ENCODE measurements at regions of chr10 and their contacts with region 1.

Region 1: GRCh38 chr10:100158044-100158808 is 27.6 kb downstream of the ERLIN1 start:
- DNase-seq: no peak
- ATAC-seq: no peak
- H3K4me3 ChIP-seq: no peak overlapping the region
- H3K4me3 Mint-ChIP-seq: no peak overlapping the region
- H3K27ac ChIP-seq: no peak overlapping the region
- H3K27ac Mint-ChIP-seq: no peak overlapping the region
- H3K4me1 ChIP-seq: no peaks in the 10 kb centered on the region
- H3K4me1 Mint-ChIP-seq: peaks cover 14% of the 10 kb centered on the region
- H3K27me3 ChIP-seq: no peaks in the 10 kb centered on the region
- H3K27me3 Mint-ChIP-seq: no peaks in the 10 kb centered on the region
- CTCF ChIP-seq: no peak

Region 2: DNA sequence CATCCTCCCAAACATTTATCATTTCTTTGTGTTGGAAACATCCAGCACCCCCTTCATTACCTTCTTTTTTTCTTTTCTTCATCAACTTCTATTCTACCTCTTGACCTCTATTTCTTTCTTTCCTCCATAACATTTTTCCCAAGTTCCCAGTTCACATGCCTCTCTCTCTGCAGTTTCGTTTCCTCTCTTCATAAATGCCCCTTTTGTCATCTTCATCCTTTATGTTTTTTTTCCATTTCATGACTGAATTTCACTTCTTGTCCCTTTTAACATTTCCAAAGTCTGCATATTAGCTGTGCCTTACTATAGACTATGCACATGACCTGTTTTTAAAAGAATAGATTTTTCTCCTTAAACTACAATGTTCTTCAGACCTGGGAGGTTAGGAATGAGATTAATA is 100.3 kb before region 1 on chr10:
- CTCF ChIA-PET with region 1: no interaction called
- POLR2A ChIA-PET with region 1: no interaction called
- intact Hi-C with region 1: no loop called
- DNase-seq: no peak
- ATAC-seq: no peak
- H3K4me3 ChIP-seq: no peak overlapping the region
- H3K4me3 Mint-ChIP-seq: no peak overlapping the region
- H3K27ac ChIP-seq: no peak overlapping the region
- H3K27ac Mint-ChIP-seq: no peak overlapping the region
- H3K4me1 ChIP-seq: no peaks in the 10 kb centered on the region
- H3K4me1 Mint-ChIP-seq: no peaks in the 10 kb centered on the region
- H3K27me3 ChIP-seq: no peaks in the 10 kb centered on the region
- H3K27me3 Mint-ChIP-seq: peaks cover 27% of the 10 kb centered on the region
- CTCF ChIP-seq: no peak

Region 3: DNA sequence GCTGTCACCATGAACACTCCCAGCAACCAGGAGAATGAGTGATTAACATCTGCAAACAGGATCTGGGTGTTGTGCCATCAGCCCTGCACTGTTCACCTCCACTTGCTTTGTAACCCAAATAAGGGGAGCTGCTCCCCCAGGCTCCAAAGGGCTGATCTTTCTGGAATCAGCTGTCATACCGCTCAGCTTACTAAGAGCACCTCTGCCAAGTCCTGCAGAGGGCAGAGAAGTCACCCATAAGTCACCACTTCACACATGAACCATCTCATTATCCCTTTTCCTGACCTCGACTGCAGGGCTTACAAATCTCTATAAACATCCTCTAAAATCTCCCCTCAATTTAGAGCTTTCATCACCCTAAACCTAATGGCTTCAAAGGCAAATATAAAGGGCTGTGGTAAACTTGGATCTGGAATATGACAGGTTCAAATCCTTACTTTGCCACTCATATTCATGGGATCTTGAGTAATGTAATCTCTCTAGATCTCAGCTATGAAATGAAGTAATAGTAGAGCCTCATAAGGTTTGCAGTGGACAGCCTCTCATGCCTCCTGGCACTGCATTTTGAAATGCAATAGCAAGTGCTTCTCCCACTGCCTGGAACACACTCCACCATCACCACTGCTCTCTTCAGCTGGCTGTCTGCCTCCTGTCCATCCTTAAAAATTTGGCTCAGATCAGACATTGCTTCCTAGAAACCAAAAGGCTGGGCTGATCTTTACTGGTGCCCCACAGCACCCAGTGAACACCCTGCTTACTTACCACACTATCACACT is 11.2 kb before region 1 on chr10:
- CTCF ChIA-PET with region 1: no interaction called
- POLR2A ChIA-PET with region 1: no interaction called
- intact Hi-C with region 1: no loop called
- DNase-seq: no peak
- ATAC-seq: no peak
- H3K4me3 ChIP-seq: no peak overlapping the region
- H3K4me3 Mint-ChIP-seq: no peak overlapping the region
- H3K27ac ChIP-seq: no peak overlapping the region
- H3K27ac Mint-ChIP-seq: no peak overlapping the region
- H3K4me1 ChIP-seq: no peaks in the 10 kb centered on the region
- H3K4me1 Mint-ChIP-seq: no peaks in the 10 kb centered on the region
- H3K27me3 ChIP-seq: no peaks in the 10 kb centered on the region
- H3K27me3 Mint-ChIP-seq: peaks cover 11% of the 10 kb centered on the region
- CTCF ChIP-seq: no peak

Region 4: GRCh38 chr10:100204370-100204769 is 46.1 kb after region 1 on chr10:
- CTCF ChIA-PET with region 1: no interaction called
- POLR2A ChIA-PET with region 1: no interaction called
- intact Hi-C with region 1: loop called in 1 of 2 experiments (anchors 1 kb)
- DNase-seq: no peak
- ATAC-seq: no peak
- H3K4me3 ChIP-seq: no peak overlapping the region
- H3K4me3 Mint-ChIP-seq: no peak overlapping the region
- H3K27ac ChIP-seq: no peak overlapping the region
- H3K27ac Mint-ChIP-seq: no peak overlapping the region
- H3K4me1 ChIP-seq: no peaks in the 10 kb centered on the region
- H3K4me1 Mint-ChIP-seq: no peaks in the 10 kb centered on the region
- H3K27me3 ChIP-seq: no peaks in the 10 kb centered on the region
- H3K27me3 Mint-ChIP-seq: no peaks in the 10 kb centered on the region
- CTCF ChIP-seq: no peak

Region 5: DNA sequence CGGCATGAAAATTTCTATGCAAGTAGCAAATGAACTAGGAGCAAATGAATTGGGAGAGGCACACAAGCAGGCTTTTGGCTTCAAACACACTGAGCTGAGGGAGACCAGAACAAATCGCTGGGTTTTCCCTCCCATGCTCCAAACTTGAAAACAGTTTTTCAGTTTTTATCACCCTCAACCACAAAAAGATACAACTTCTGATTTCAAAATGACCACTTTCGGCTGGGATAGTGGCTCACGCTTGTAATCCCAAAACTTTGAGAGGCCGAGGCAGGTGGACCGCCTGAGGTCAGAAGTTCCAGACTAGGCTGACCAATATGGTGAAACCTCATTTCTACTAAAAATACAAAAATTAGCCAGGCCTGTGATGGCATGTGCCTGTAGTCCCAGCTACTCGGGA is 80.2 kb after region 1 on chr10:
- CTCF ChIA-PET with region 1: no interaction called
- POLR2A ChIA-PET with region 1: no interaction called
- intact Hi-C with region 1: no loop called
- DNase-seq: no peak
- ATAC-seq: no peak
- H3K4me3 ChIP-seq: no peak overlapping the region
- H3K4me3 Mint-ChIP-seq: no peak overlapping the region
- H3K27ac ChIP-seq: no peak overlapping the region
- H3K27ac Mint-ChIP-seq: no peak overlapping the region
- H3K4me1 ChIP-seq: no peaks in the 10 kb centered on the region
- H3K4me1 Mint-ChIP-seq: peaks cover 3% of the 10 kb centered on the region
- H3K27me3 ChIP-seq: no peaks in the 10 kb centered on the region
- H3K27me3 Mint-ChIP-seq: no peaks in the 10 kb centered on the region
- CTCF ChIP-seq: no peak

Region 6: DNA sequence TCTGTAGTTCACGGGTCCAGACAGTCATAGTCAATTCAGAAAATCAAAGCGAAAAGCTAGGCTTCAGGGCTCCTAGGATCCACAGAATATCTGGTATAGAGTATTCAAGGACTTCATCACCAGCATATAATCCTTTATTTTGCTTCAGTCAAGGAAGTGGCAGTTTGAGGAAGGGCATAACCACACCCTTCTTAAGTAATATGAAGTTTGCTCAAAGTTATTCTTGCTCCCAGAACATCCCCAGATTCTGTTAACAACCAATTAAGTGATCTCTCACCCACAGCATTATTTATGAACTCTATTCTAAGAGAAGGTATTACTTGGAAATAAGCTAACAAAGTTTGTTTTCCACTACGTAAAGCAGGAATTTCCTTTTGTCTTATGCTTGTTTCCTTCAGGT is 96.0 kb after region 1 on chr10:
- CTCF ChIA-PET with region 1: no interaction called
- POLR2A ChIA-PET with region 1: no interaction called
- intact Hi-C with region 1: no loop called
- DNase-seq: no peak
- ATAC-seq: no peak
- H3K4me3 ChIP-seq: no peak overlapping the region
- H3K4me3 Mint-ChIP-seq: no peak overlapping the region
- H3K27ac ChIP-seq: no peak overlapping the region
- H3K27ac Mint-ChIP-seq: no peak overlapping the region
- H3K4me1 ChIP-seq: no peaks in the 10 kb centered on the region
- H3K4me1 Mint-ChIP-seq: peaks cover 2% of the 10 kb centered on the region
- H3K27me3 ChIP-seq: no peaks in the 10 kb centered on the region
- H3K27me3 Mint-ChIP-seq: no peaks in the 10 kb centered on the region
- CTCF ChIP-seq: no peak

Measured in CD8-positive, alpha-beta T cell (primary cell).